ENCODE measurements at regions of chr16 and their contacts with region 1.

Region 1: GRCh38 chr16:72832621-72833248 is 215.2 kb downstream of the ZFHX3 start:
- DNase-seq: peak; percentile 40 to 83
- H3K4me3 ChIP-seq: no peak overlapping the region
- H3K27ac ChIP-seq: no peak overlapping the region
- H3K4me1 ChIP-seq: 0 out of 2 replicates have a peak, but pooled peaks cover 5% of the 10 kb centered on the region
- H3K27me3 ChIP-seq: no peaks in the 10 kb centered on the region
- CTCF ChIP-seq: peak; percentile 99

Region 2: DNA sequence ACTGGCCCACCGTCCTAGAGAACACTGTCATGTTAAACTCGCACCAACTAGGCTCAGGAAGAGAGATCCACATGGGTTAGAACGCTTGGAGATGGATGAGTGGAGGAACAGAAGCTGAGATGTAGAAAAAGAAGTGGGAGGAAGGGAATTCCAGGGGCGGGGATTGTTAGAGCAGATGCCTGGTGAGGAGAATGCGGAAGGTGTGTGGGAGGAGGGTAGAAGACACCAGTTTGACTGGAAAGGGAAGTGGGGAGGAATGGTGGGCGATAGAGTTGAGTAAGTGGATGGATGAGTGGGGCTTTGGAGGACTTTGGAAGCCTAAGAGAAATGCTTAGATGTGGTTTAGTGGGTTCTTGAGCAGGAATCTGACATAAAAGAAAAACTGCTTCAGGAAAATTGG is 701.7 kb before region 1 on chr16:
- CTCF ChIA-PET with region 1: interaction called, 12 read pairs
- POLR2A ChIA-PET with region 1: no interaction called
- intact Hi-C with region 1: no loop called
- DNase-seq: no peak
- H3K4me3 ChIP-seq: no peak overlapping the region
- H3K27ac ChIP-seq: no peak overlapping the region
- H3K4me1 ChIP-seq: no peaks in the 10 kb centered on the region
- H3K27me3 ChIP-seq: peaks cover 75% of the 10 kb centered on the region
- CTCF ChIP-seq: no peak

Region 3: GRCh38 chr16:73006026-73006425 is 173.3 kb after region 1 on chr16:
- CTCF ChIA-PET with region 1: no interaction called
- POLR2A ChIA-PET with region 1: no interaction called
- intact Hi-C with region 1: no loop called
- DNase-seq: no peak
- H3K4me3 ChIP-seq: no peak overlapping the region
- H3K27ac ChIP-seq: no peak overlapping the region
- H3K4me1 ChIP-seq: peaks cover 25% of the 10 kb centered on the region
- H3K27me3 ChIP-seq: no peaks in the 10 kb centered on the region
- CTCF ChIP-seq: no peak

Region 4: GRCh38 chr16:73172241-73172972 is 339.7 kb after region 1 on chr16:
- CTCF ChIA-PET with region 1: no interaction called
- POLR2A ChIA-PET with region 1: no interaction called
- intact Hi-C with region 1: loop called (anchors 1 kb)
- DNase-seq: peak in 1 of 2 experiments; percentile 23
- H3K4me3 ChIP-seq: no peak overlapping the region
- H3K27ac ChIP-seq: no peak overlapping the region
- H3K4me1 ChIP-seq: peaks cover 6% of the 10 kb centered on the region; the same call in 1 of the 2 replicates
- H3K27me3 ChIP-seq: no peaks in the 10 kb centered on the region
- CTCF ChIP-seq: peak; percentile 54

Region 5: DNA sequence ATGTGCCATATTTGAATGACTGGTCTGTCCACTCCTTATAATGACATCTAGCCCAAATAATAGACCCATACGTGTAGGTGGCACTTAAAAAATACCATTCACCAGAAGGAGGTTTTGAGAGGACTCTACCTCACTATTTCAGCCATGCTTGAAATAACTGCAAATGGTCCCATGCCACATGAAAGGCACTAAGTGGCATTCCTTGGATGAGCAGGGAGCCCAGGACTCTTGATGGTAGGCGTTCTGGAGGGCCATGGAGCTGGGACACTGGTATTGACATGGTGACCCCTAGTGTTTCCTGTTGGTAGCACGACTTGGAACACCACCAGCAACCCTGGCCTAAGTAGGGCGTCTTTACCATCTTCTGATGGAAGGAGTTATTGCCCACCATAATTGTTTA is 363.9 kb after region 1 on chr16:
- CTCF ChIA-PET with region 1: interaction called, 5 read pairs
- POLR2A ChIA-PET with region 1: no interaction called
- intact Hi-C with region 1: loop called (anchors 1 kb)
- DNase-seq: peak; percentile 38 to 49
- H3K4me3 ChIP-seq: no peak overlapping the region
- H3K27ac ChIP-seq: no peak overlapping the region
- H3K4me1 ChIP-seq: no peaks in the 10 kb centered on the region
- H3K27me3 ChIP-seq: peaks cover 2% of the 10 kb centered on the region; the same call in 1 of the 2 replicates
- CTCF ChIP-seq: peak; percentile 70